ENCODE measurements at regions of chr4 and their contacts with region 1.

Region 1: GRCh38 chr4:154551872-154552686 is 1.9 kb upstream of the PLRG1 start:
- DNase-seq: peak; percentile 80
- H3K4me3 Mint-ChIP-seq: no peak overlapping the region
- H3K27ac Mint-ChIP-seq: no peak overlapping the region
- H3K4me1 Mint-ChIP-seq: peaks cover 20% of the 10 kb centered on the region
- H3K27me3 Mint-ChIP-seq: no peaks in the 10 kb centered on the region

Region 2: DNA sequence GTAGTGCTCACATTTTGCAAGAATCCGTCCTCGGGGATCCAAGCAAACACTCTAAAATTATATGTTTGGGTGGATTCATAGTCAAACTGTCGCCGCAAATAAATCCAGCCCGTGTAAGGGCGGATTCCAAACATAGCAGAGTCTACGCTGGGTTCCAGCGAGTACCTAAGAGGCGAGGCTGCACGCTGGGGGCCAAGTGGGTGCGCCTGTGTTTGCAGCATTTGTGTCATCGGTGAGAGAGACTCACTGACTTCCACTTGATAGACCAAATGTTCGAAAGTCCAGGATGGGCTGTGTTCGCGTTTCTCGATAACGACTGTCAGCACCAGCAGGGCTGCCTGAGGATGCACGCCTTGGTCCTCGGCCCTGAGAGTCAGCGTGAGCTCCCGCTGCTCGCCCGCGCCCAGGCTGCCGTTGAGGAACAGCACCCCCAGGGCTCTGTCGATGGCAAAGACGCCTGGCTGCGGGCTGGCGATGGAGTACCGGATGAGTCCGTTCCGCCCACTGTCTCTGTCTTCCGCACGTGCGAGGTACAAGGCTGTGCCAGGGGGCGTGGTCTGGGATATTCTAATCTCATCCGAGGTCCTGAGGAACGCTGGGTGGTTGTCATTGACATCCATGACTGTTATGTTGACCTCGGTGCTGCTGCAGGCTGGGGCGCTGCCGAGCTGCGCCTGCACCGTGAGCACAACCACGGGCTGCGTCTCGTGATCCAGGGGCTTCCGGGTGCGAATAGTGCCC is 219.2 kb before region 1 on chr4:
- CTCF ChIA-PET with region 1: no interaction called
- POLR2A ChIA-PET with region 1: no interaction called
- intact Hi-C with region 1: loop called (anchors 2 kb)
- DNase-seq: peak; percentile 80
- H3K4me3 Mint-ChIP-seq: peak overlapping the region; percentile 61
- H3K27ac Mint-ChIP-seq: no peak overlapping the region
- H3K4me1 Mint-ChIP-seq: peaks cover 11% of the 10 kb centered on the region
- H3K27me3 Mint-ChIP-seq: peaks cover 26% of the 10 kb centered on the region

Region 3: DNA sequence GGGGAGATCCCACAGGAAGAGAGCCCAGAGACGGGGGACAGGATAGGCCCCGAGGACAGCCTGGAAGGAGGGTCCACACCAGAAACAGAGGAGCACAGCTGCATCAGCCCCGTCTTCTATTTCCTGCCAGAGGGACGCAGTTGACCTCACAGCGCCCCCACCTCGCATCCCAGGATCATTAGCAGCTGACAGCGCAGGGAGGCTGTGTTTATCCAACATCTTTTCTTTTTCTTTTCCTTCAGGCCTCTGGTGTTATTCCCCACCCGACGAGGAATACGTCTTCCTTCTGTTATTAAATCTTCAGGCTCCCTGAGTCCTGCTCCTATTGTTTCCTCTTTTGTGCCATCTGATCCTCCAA is 135.9 kb before region 1 on chr4:
- CTCF ChIA-PET with region 1: no interaction called
- POLR2A ChIA-PET with region 1: no interaction called
- intact Hi-C with region 1: no loop called
- DNase-seq: no peak
- H3K4me3 Mint-ChIP-seq: peak overlapping the region; percentile 53
- H3K27ac Mint-ChIP-seq: no peak overlapping the region
- H3K4me1 Mint-ChIP-seq: peaks cover 16% of the 10 kb centered on the region
- H3K27me3 Mint-ChIP-seq: peaks cover 31% of the 10 kb centered on the region

Region 4: GRCh38 chr4:154618708-154619315 is 66.7 kb after region 1 on chr4:
- CTCF ChIA-PET with region 1: interaction called, 222 read pairs
- POLR2A ChIA-PET with region 1: no interaction called
- intact Hi-C with region 1: loop called (anchors 1 kb)
- DNase-seq: peak; percentile 68
- H3K4me3 Mint-ChIP-seq: no peak overlapping the region
- H3K27ac Mint-ChIP-seq: no peak overlapping the region
- H3K4me1 Mint-ChIP-seq: peaks cover 8% of the 10 kb centered on the region
- H3K27me3 Mint-ChIP-seq: no peaks in the 10 kb centered on the region

Region 5: DNA sequence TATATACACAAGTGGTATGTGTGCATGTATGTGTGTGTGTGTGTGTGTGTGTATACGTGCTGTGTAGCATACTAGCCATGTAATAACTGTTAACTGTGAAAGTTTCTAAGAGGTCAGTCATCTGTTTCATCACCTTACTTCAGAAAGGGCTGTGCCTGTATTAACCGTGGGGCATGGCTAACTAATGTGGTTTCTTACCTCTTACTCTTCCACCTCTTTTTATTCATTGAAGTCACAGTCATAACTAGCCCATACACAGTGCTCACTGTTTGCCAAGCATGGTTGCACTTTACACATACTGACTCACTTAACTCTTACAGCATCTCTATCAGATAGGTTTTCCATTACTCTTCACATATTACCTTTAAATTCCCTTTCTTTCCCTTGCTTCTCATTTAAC is 168.0 kb after region 1 on chr4:
- CTCF ChIA-PET with region 1: no interaction called
- POLR2A ChIA-PET with region 1: no interaction called
- intact Hi-C with region 1: loop called (anchors 5 kb)
- DNase-seq: no peak
- H3K4me3 Mint-ChIP-seq: no peak overlapping the region
- H3K27ac Mint-ChIP-seq: no peak overlapping the region
- H3K4me1 Mint-ChIP-seq: no peaks in the 10 kb centered on the region
- H3K27me3 Mint-ChIP-seq: peaks cover 2% of the 10 kb centered on the region

Region 6: GRCh38 chr4:155047755-155048154 is 495.7 kb after region 1 on chr4:
- CTCF ChIA-PET with region 1: no interaction called
- POLR2A ChIA-PET with region 1: no interaction called
- intact Hi-C with region 1: no loop called
- DNase-seq: no peak
- H3K4me3 Mint-ChIP-seq: no peak overlapping the region
- H3K27ac Mint-ChIP-seq: no peak overlapping the region
- H3K4me1 Mint-ChIP-seq: no peaks in the 10 kb centered on the region
- H3K27me3 Mint-ChIP-seq: no peaks in the 10 kb centered on the region

Region 7: DNA sequence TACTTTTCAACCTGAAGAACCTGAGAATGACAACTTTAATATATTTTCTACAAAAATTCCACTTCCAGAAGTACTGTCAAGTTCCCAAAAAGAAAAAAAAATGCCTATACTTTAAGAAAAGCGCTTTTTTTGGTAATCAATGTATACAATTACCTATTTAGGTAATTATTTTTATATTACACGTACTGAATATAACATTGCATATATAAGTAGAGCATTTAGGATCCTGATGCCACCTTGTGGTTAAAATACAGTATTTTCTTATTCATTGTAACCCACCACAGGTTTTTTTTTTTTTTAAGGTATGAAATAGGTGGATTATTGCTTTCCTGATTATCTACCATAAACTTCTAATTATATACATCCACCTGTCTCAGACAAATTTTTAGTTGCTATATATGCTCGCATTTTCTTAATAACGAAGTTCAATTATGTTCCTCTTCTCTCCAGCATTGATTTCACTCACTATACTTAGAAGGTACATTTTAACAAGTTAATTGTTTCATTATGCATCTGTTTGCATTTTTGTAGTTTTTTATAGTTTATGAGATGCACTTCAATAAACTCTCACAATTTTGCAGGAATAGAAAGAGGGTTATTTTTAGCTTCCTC is 819.5 kb after region 1 on chr4:
- CTCF ChIA-PET with region 1: interaction called, 6 read pairs
- POLR2A ChIA-PET with region 1: interaction called, 3 read pairs
- intact Hi-C with region 1: loop called (anchors 1 kb)
- DNase-seq: no peak
- H3K4me3 Mint-ChIP-seq: no peak overlapping the region
- H3K27ac Mint-ChIP-seq: no peak overlapping the region
- H3K4me1 Mint-ChIP-seq: peaks cover 10% of the 10 kb centered on the region
- H3K27me3 Mint-ChIP-seq: no peaks in the 10 kb centered on the region

Region 8: DNA sequence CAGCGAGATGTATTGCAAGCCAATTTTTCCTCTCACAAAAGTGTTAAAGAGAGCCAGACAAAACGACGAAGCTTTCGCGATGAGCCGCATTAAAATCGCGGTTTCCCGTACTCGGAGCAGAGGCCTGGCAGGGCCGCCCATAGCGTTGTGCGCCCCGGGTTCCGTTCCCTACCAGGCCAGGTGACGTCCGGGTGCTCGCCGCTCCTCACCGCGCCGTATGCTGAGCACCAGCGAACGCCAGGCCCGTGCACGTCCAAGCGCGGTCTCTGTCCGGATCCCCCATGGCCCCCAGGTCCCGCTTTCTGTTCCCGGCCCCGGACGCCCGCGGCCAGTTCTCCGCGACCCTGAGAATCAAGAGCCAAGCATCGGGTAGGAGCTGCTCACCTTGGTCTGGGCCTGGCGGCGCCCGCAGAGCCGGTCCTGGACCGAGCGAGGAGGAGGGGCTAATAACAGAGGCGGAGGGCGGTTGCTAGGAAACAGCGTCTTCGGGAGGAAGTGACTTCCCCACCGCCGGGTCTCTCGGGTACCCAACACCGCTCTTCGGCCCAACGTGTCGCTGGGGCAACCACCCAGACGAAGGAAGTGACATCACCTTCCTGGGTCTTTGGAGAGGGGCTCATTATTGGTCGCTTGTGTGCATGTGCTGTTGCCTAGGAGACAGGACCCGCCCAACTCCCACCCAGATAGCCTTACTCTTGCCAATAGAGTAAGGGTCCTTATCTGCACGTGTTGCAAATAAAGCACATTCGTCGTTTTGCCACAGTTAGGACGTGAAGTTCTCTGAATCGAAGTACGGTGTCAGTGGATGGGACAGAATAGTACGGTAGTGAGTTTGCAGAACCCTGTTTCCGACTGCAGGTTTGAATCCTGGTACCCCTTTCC is 824.5 kb after region 1 on chr4 and contains the start of gene MAP9:
- CTCF ChIA-PET with region 1: interaction called, 6 read pairs
- POLR2A ChIA-PET with region 1: interaction called, 3 read pairs
- intact Hi-C with region 1: loop called (anchors 1 kb)
- DNase-seq: peak; percentile 92
- H3K4me3 Mint-ChIP-seq: peak within 1 kb of the TSS; percentile 86
- H3K27ac Mint-ChIP-seq: peak within 1 kb of the TSS; percentile 84
- H3K4me1 Mint-ChIP-seq: peaks cover 16% of the 10 kb centered on the region
- H3K27me3 Mint-ChIP-seq: no peaks in the 10 kb centered on the region
- total RNA-seq, gene MAP9: 6.9 to 8.3 TPM

Region 9: DNA sequence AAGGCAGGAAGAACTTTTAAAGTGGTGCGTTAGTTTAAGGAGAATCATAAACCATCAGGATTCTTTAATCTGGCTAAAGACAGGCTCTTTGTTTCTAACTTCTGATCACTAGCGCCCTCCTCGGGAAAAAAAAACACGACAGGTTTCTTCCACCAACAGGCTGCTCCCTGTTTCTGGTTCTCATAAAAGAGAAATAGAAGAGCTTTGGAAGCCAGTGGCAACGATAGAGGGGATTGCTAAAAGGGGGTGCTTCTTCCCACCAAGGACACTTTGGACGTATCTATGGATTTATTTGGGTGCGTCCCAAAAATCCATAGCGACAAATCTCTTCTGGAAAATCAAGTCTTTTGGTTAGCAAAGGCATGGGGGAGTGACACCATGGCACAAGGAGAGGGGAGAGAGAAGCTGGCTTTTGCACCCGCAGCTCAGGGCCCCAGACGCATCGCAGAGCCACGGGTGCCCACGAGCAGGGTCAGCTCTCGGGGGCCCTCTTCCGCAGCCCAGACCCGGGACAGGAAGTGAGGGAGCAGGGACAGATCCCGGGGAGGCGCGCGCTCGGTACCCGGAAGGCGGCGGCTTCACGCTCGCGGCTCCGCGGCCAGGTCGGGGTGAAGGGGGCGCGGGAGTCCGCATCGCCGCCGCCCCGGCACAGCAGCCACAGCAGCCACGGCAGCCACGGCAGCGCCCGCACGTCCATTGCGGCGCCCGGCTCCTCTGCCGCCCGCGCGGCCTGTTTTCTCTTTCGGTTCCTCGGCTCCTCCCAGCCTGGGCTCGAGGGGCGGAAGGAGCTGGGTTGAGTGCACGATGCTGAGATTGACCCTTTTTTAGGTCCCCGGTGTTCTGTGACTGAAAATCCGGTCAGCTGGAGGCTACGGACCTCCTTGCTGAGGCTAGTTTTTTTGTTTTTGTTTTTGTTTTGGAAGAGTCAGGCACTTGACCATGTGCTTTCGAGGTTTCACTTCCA is 1401.4 kb after region 1 on chr4 and contains the start of gene CTSO:
- CTCF ChIA-PET with region 1: interaction called, 6 read pairs
- POLR2A ChIA-PET with region 1: no interaction called
- intact Hi-C with region 1: loop called (anchors 1 kb)
- DNase-seq: peak; percentile 78
- H3K4me3 Mint-ChIP-seq: peak within 1 kb of the TSS; percentile 93
- H3K27ac Mint-ChIP-seq: peak within 1 kb of the TSS; percentile 92
- H3K4me1 Mint-ChIP-seq: peaks cover 14% of the 10 kb centered on the region
- H3K27me3 Mint-ChIP-seq: peaks cover 4% of the 10 kb centered on the region
- total RNA-seq, gene CTSO: 2.5 to 2.6 TPM